K562 (cell line): ENCODE measurements at regions of chr1 and their contacts with region 1.

Region 1: GRCh38 chr1:204354579-204354978 is 5.2 kb downstream of the PLEKHA6 start:
- DNase-seq: no peak
- ATAC-seq: no peak
- H3K4me3 ChIP-seq: no peak overlapping the region
- H3K27ac ChIP-seq: no peak overlapping the region
- H3K4me1 ChIP-seq: peaks cover under 1 to 11% of the 10 kb centered on the region in 2 experiments; a peak in 3 of 5 replicates
- H3K27me3 ChIP-seq: peaks cover 17 to 48% of the 10 kb centered on the region in 2 experiments; a peak in 4 of 5 replicates
- CTCF ChIP-seq: no peak
- EP300 ChIP-seq: no peak
- POLR2A ChIP-seq: no peak
- RAD21 ChIP-seq: no peak

Region 2: GRCh38 chr1:204171751-204172178 is 182.8 kb before region 1 on chr1:
- CTCF ChIA-PET with region 1: no interaction called
- POLR2A ChIA-PET with region 1: no interaction called
- in situ Hi-C with region 1: no loop called
- intact Hi-C with region 1: no loop called
- DNase-seq: no peak
- ATAC-seq: no peak
- H3K4me3 ChIP-seq: no peak overlapping the region
- H3K27ac ChIP-seq: no peak overlapping the region
- H3K4me1 ChIP-seq: peaks cover 4 to 7% of the 10 kb centered on the region in 2 experiments; a peak in 3 of 5 replicates
- H3K27me3 ChIP-seq: peaks cover 4 to 5% of the 10 kb centered on the region in 2 experiments; a peak in 4 of 5 replicates
- CTCF ChIP-seq: no peak
- EP300 ChIP-seq: no peak
- POLR2A ChIP-seq: no peak
- RAD21 ChIP-seq: 0 out of 4 replicates have a peak, but pooled peaks of 1 of the 2 experiments have one; percentile 21

Region 3: GRCh38 chr1:204341380-204341779 is 13.2 kb before region 1 on chr1:
- CTCF ChIA-PET with region 1: no interaction called
- POLR2A ChIA-PET with region 1: interaction called, 10 read pairs
- in situ Hi-C with region 1: no loop called
- intact Hi-C with region 1: no loop called
- DNase-seq: no peak
- ATAC-seq: no peak
- H3K4me3 ChIP-seq: no peak overlapping the region
- H3K27ac ChIP-seq: no peak overlapping the region
- H3K4me1 ChIP-seq: no peaks in the 10 kb centered on the region; a peak in 1 of 5 replicates
- H3K27me3 ChIP-seq: peaks cover 57 to 71% of the 10 kb centered on the region in 2 experiments
- CTCF ChIP-seq: no peak
- EP300 ChIP-seq: no peak
- POLR2A ChIP-seq: no peak
- RAD21 ChIP-seq: no peak